ENCODE measurements at regions of chr15 and their contacts with region 1.

Region 1: GRCh38 chr15:79450648-79451047 is 18.5 kb downstream of the MINAR1 start:
- DNase-seq: no peak
- H3K4me3 ChIP-seq: no peak overlapping the region
- H3K4me3 Mint-ChIP-seq: no peak overlapping the region
- H3K27ac Mint-ChIP-seq: no peak overlapping the region
- H3K4me1 ChIP-seq: no peaks in the 10 kb centered on the region
- H3K4me1 Mint-ChIP-seq: no peaks in the 10 kb centered on the region
- H3K27me3 ChIP-seq: no peaks in the 10 kb centered on the region
- H3K27me3 Mint-ChIP-seq: no peaks in the 10 kb centered on the region
- CTCF ChIP-seq: peak in 1 of 2 experiments; percentile 13

Region 2: GRCh38 chr15:79136434-79137046 is 314.1 kb before region 1 on chr15:
- CTCF ChIA-PET with region 1: no interaction called
- POLR2A ChIA-PET with region 1: interaction called, 12 read pairs
- intact Hi-C with region 1: no loop called
- DNase-seq: no peak
- H3K4me3 ChIP-seq: no peak overlapping the region
- H3K4me3 Mint-ChIP-seq: no peak overlapping the region
- H3K27ac Mint-ChIP-seq: no peak overlapping the region
- H3K4me1 ChIP-seq: no peaks in the 10 kb centered on the region
- H3K4me1 Mint-ChIP-seq: peaks cover 6% of the 10 kb centered on the region
- H3K27me3 ChIP-seq: no peaks in the 10 kb centered on the region
- H3K27me3 Mint-ChIP-seq: peaks cover 8% of the 10 kb centered on the region
- CTCF ChIP-seq: no peak

Region 3: DNA sequence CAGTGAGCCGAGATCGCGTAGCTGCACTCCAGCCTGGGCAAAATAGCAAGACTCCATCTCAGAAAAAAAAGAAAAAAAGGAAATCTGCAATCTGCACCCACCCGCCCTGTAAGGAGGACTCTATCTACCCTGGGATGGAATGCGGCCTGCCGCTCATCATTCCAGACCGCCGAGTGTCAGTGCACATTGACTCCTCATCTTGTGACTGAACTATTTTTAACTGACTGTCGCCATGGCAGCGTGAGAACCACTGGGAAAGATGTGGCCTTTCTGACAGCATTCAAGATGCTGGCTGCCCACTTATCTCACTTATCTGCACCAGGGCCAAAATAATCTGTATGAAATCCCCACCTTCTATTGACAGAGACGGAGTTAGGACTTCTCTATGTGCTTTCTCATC is 206.9 kb before region 1 on chr15:
- CTCF ChIA-PET with region 1: no interaction called
- POLR2A ChIA-PET with region 1: no interaction called
- intact Hi-C with region 1: no loop called
- DNase-seq: no peak
- H3K4me3 ChIP-seq: no peak overlapping the region
- H3K4me3 Mint-ChIP-seq: no peak overlapping the region
- H3K27ac Mint-ChIP-seq: no peak overlapping the region
- H3K4me1 ChIP-seq: no peaks in the 10 kb centered on the region
- H3K4me1 Mint-ChIP-seq: no peaks in the 10 kb centered on the region
- H3K27me3 ChIP-seq: no peaks in the 10 kb centered on the region
- H3K27me3 Mint-ChIP-seq: peaks cover 6% of the 10 kb centered on the region
- CTCF ChIP-seq: no peak

Measured in Caco-2 (cell line).